ENCODE measurements at regions of chr11 and their contacts with region 1.

Region 1: GRCh38 chr11:47152953-47153950 is 23.4 kb downstream of the ARFGAP2 start:
- DNase-seq: peak; percentile 75 to 98 (median 86)

Region 2: GRCh38 chr11:46889689-46890475 is 263.4 kb before region 1 on chr11:
- intact Hi-C with region 1: loop called (anchors 2 kb)
- DNase-seq: peak in 7 of 10 donors; percentile 46 to 90 (median 76)

Region 3: DNA sequence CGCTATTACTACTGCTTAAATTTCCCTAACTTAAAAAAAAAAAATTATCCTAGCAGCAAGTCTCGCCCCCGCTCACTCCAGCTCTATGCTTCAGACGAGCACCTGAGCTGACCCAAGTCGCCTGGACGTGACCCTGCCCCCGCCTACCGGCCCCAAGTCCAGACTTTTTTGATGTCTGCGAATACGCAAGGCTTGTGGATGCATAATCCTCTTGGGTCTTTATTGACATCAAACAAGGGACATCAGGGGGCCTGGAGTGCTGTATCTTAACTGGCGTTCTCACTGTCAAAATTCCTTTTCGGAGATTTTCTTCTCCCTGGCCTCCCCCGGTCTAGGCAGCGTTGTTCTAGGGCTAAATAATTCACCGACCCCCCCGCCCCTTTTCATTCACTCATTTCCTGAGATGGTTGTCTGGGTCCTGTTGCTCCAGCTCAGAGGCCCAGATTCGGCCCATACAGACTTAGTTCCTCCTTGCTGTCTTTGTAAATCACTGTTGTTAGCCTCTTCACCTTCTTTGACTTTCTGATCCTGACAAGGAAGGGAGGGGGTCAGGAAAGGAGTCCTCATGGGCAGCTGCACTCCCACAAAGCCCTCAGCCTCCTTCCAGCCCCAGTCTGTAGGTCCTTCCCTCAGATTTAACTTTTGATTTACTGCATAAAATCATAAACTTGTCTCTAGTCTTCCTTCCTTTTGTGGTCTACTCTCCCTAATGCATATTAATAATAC is 234.3 kb before region 1 on chr11:
- intact Hi-C with region 1: loop called (anchors 1 kb)
- DNase-seq: no peak

Region 4: DNA sequence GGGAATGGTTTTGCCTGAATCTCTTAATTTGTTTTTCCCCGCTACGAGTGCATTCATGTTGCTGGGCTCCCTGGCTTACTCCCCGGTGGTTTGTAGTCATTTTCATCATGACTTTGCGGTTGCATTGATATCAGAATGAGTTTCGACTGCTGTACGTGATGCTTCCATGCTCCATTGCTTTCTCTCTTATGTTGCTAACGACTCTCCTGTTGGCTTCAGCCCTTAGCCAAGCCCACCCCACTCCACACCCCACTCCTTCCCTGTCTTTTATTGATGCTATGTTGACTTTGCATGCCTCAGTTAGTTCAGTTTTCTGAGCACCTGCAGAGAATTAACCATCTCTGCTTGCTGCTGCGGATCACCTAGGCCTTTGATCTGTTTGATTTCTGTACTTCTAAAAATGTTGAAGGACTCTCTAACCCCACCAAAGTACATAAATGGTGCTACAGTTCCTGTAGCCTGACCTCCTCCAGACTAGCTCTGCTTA is 41.9 kb before region 1 on chr11:
- intact Hi-C with region 1: loop called (anchors 5 kb)
- DNase-seq: no peak

Region 5: GRCh38 chr11:47331454-47332302 is 178.4 kb after region 1 on chr11:
- intact Hi-C with region 1: no loop called
- DNase-seq: peak in 2 of 10 donors; percentile 62 to 77